Endothelial cell of umbilical vein (primary cell): ENCODE measurements at regions of chr16 and their contacts with region 1.

Region 1: GRCh38 chr16:24580665-24581064 is 41.3 kb downstream of the RBBP6 start:
- DNase-seq: peak; percentile 55
- H3K4me3 ChIP-seq: no peak overlapping the region
- H3K27ac ChIP-seq: no peak overlapping the region
- H3K4me1 ChIP-seq: peaks cover 9% of the 10 kb centered on the region
- H3K27me3 ChIP-seq: no peaks in the 10 kb centered on the region
- CTCF ChIP-seq: peak; percentile 14 to 15
- POLR2A ChIP-seq: no peak

Region 2: GRCh38 chr16:24309222-24309905 is 271.3 kb before region 1 on chr16:
- CTCF ChIA-PET with region 1: no interaction called
- POLR2A ChIA-PET with region 1: no interaction called
- dilution Hi-C with region 1: no loop called
- intact Hi-C with region 1: no loop called
- DNase-seq: peak; percentile 78
- H3K4me3 ChIP-seq: no peak overlapping the region
- H3K27ac ChIP-seq: no peak overlapping the region
- H3K4me1 ChIP-seq: no peaks in the 10 kb centered on the region
- H3K27me3 ChIP-seq: no peaks in the 10 kb centered on the region
- CTCF ChIP-seq: no peak
- POLR2A ChIP-seq: no peak

Region 3: DNA sequence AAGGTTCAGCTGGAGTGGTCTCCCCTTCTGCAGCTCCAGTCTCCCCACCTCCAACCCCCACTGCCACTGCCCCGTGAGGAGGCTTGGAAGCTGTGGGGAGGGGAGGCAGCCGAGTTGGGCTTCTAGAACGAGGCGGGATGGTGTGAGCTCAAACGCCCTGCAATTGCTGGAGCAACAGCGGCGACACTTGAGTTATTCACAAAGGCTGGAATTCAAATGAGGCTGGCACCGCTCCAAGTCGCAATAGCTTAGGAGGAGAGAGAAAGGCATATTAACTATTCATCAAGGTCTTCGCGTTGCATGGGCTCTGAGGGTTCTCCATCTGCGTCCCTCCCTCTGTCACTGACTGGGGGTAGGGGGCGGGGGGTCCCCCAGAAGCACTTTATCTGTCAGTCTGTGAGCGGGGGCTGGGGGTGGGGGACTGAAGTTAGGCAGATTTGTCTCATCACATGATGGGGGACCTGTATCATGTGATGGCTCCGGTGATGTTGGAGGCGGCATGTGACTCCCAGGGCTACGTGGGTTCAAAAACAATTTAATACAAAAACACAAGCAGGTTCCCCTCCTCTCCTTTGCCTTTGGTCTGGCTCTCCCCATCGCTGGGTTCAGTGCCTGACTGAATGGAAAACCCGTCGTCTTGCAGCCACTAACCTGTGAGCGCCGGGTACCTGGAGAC is 29.2 kb after region 1 on chr16:
- CTCF ChIA-PET with region 1: interaction called, 13 read pairs
- POLR2A ChIA-PET with region 1: no interaction called
- dilution Hi-C with region 1: no loop called
- intact Hi-C with region 1: no loop called
- DNase-seq: peak; percentile 66
- H3K4me3 ChIP-seq: peak overlapping the region in 1 of 3 experiments; percentile 18
- H3K27ac ChIP-seq: no peak overlapping the region
- H3K4me1 ChIP-seq: peaks cover 6% of the 10 kb centered on the region
- H3K27me3 ChIP-seq: peaks cover 5 to 24% of the 10 kb centered on the region in 2 experiments
- CTCF ChIP-seq: no peak
- POLR2A ChIP-seq: no peak

Region 4: DNA sequence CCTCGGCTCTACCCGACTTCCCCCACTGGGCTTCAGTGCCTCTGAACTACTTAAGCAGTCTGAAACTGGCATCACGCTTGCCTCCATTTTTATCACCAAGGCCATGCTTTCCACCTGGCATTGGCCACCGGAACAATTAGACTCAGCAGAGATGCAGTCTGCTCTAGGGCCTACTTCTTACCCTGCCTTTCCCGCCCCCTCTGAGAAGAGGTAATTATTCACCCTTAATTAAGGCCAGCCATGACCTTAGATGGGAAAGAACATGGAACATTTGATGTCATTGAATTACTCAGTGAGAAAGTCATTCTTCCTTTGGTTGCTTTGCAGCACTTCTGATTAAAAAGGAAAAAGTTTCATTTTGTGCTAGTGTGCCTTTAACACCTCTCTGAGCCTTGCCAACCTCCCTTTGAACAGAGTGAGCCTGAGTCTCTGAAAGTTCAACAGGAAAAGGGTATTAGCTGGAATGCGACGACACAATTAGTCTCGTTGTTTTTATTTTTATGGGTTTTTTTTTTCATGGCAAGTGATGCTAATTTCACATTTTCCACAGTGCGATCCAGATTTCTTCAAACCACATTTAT is 87.9 kb after region 1 on chr16:
- CTCF ChIA-PET with region 1: interaction called, 11 read pairs
- POLR2A ChIA-PET with region 1: no interaction called
- dilution Hi-C with region 1: no loop called
- intact Hi-C with region 1: no loop called
- DNase-seq: peak; percentile 87
- H3K4me3 ChIP-seq: no peak overlapping the region
- H3K27ac ChIP-seq: peak overlapping the region; percentile 85
- H3K4me1 ChIP-seq: peaks cover 14% of the 10 kb centered on the region
- H3K27me3 ChIP-seq: no peaks in the 10 kb centered on the region
- CTCF ChIP-seq: no peak
- POLR2A ChIP-seq: no peak

Region 5: GRCh38 chr16:24700549-24701392 is 120.1 kb after region 1 on chr16:
- CTCF ChIA-PET with region 1: interaction called, 4 read pairs
- POLR2A ChIA-PET with region 1: no interaction called
- dilution Hi-C with region 1: no loop called
- intact Hi-C with region 1: loop called (anchors 2 kb)
- DNase-seq: peak; percentile 94
- H3K4me3 ChIP-seq: no peak overlapping the region
- H3K27ac ChIP-seq: peak overlapping the region; percentile 81
- H3K4me1 ChIP-seq: peaks cover 20% of the 10 kb centered on the region
- H3K27me3 ChIP-seq: no peaks in the 10 kb centered on the region
- CTCF ChIP-seq: peak; percentile 26 to 58
- POLR2A ChIP-seq: no peak

Region 6: DNA sequence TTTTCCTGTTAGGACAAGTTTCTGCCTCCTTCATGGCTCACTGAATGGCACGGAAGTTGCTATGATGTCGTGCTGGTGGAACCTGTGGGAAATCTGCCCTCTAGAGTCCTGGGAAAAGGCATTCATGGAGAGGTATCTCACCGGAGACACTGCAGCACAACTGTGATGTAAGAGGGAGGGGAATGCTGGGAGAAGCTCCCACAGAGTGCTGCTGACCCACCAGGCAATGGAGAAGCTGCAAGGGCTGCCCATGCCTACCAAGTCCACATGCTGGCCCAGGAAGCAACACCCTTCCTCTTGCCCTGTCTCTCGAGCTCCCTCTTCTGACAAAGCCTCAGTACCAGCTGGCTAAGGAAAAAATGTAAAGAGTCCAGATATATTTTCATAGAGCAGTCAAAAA is 219.9 kb after region 1 on chr16:
- CTCF ChIA-PET with region 1: interaction called, 47 read pairs
- POLR2A ChIA-PET with region 1: no interaction called
- dilution Hi-C with region 1: no loop called
- intact Hi-C with region 1: loop called (anchors 2 kb)
- DNase-seq: peak; percentile 35
- H3K4me3 ChIP-seq: no peak overlapping the region
- H3K27ac ChIP-seq: no peak overlapping the region
- H3K4me1 ChIP-seq: no peaks in the 10 kb centered on the region
- H3K27me3 ChIP-seq: no peaks in the 10 kb centered on the region
- CTCF ChIP-seq: peak; percentile 21 to 24
- POLR2A ChIP-seq: no peak